HCT116 (cell line): ENCODE measurements at regions of chr3 and their contacts with region 1.

Region 1: DNA sequence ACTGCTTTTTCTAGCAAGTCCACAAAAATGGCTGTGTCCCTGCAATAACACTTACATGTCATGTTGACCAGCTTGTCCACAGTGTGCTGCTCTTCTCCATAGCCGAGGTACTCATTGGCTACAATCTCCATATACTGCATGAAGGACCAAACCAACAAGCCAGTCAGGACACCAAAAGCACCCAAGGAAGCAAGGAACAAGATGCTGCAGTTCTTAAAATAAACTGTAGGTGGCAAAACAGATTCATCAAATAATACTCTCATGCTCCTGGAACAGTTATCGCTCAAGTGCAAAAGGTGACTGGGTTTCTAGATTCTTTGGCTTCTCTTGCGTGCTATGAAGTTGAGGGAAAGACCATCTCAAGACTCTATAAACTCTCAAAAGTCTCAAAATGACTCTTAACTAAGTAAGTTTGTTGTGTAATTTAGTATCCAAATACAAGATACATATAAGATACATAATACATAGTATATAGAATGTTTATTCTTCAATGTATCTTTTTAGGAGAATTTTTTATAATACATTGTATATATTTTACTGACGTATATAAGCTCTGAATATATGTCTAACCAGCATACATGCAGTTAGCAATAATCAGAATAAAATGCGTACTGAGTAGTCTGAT is 57.0 kb downstream of the NEK10 start:
- DNase-seq: peak; percentile 75
- ATAC-seq: peak; percentile 79
- H3K4me3 ChIP-seq: 0 out of 4 replicates have a peak overlapping the region, but pooled peaks of 1 of the 2 experiments have one; percentile 1
- H3K27ac ChIP-seq: peak overlapping the region; percentile 60; the same call in 1 of the 2 replicates
- H3K4me1 ChIP-seq: peaks cover 18 to 27% of the 10 kb centered on the region in 2 experiments
- H3K27me3 ChIP-seq: no peaks in the 10 kb centered on the region
- CTCF ChIP-seq: peak; percentile 69 to 73 (median 70)
- POLR2A ChIP-seq: no peak
- RAD21 ChIP-seq: peak; percentile 80

Region 2: DNA sequence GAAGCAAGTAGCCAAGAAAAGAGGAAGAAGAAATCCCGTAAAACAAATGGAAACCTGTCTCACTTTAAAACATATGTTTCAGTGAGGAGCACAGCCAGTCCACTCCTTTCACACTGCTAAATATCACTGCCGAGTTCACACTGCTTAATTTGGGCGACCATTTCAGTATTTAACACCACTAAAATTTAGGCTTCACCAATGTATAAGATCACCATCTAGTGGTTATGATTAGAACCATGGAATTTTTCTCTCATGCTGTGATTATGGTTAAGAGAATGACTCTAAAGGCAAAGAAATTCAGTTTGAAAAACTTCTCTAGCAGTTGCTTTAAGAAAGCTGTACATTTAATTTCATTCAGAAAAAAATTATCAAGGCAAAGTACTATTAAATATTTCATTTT is 155.4 kb after region 1 on chr3:
- CTCF ChIA-PET with region 1: no interaction called
- POLR2A ChIA-PET with region 1: no interaction called
- RAD21 ChIA-PET with region 1: no interaction called
- intact Hi-C with region 1: loop called (anchors 2 kb)
- DNase-seq: no peak
- ATAC-seq: peak; percentile 82
- H3K4me3 ChIP-seq: no peak overlapping the region
- H3K27ac ChIP-seq: no peak overlapping the region
- H3K4me1 ChIP-seq: peaks cover 3 to 23% of the 10 kb centered on the region in 2 experiments; a peak in 3 of 4 replicates
- H3K27me3 ChIP-seq: no peaks in the 10 kb centered on the region
- CTCF ChIP-seq: peak; percentile 38 to 70 (median 56); a peak in 3 of 6 replicates
- POLR2A ChIP-seq: no peak
- RAD21 ChIP-seq: peak; percentile 63

Region 3: DNA sequence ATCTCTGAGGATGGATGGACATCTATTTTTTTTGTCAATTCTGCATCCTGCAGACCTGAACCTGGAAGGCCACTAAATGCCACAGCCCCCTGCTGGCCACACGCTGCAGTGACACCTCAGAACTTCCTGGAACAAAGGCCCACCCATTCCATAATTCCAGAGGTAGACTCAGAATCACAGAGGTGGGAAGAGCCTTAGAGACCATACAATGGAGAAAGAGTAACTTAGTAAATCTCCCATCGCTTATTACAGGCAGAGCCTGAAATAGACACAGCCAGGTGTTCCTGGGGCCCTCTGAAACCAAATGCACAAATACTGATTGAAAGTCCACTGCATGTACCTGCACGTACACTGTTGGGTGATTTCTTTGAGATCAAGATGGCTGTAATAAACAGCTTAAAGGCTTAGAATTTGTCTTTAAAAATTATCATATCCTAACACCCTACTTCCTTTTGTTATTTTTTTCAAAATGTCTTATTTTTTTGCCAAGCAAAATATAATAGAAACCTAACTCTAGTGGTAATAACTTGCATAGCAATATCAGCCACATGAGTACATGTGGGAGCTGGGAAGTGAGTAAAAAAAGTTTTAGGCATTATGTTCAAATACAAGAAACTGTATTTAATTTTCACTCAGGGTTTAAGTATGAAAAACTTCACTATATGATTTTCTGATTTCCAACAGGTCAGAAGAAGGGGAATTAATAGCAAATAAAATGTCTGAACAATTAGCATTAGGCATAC is 347.3 kb after region 1 on chr3:
- CTCF ChIA-PET with region 1: no interaction called
- POLR2A ChIA-PET with region 1: no interaction called
- RAD21 ChIA-PET with region 1: no interaction called
- intact Hi-C with region 1: loop called (anchors 1 kb)
- DNase-seq: peak; percentile 62
- ATAC-seq: peak; percentile 97
- H3K4me3 ChIP-seq: no peak overlapping the region
- H3K27ac ChIP-seq: no peak overlapping the region
- H3K4me1 ChIP-seq: peaks cover 5% of the 10 kb centered on the region in 2 experiments; a peak in 3 of 4 replicates
- H3K27me3 ChIP-seq: no peaks in the 10 kb centered on the region
- CTCF ChIP-seq: peak; percentile 75 to 92 (median 80)
- POLR2A ChIP-seq: no peak
- RAD21 ChIP-seq: peak; percentile 77

Region 4: DNA sequence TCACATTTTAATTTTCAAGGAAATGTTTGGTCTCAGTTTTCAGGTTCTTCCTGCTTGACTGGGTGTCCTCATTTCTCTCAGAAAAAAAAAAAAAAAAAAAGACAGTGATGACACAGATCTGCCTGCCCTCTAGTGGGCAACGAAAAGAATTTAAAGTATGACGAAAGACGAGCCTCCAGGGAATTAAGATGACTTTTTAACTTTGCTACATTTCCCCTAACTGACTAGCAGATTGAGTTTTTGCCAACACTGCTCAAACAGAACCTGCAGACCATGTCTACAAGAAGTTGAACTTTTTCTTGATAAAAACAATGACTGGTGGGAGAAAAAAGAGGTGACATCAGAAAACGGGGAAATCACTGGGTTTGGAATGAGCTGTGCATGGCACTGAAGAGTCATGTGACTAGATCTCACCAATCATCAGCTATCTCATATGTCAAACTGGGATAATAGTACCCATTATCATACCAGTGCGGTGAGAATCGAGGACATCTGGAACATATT is 369.1 kb after region 1 on chr3:
- CTCF ChIA-PET with region 1: interaction called, 7 read pairs
- POLR2A ChIA-PET with region 1: no interaction called
- RAD21 ChIA-PET with region 1: no interaction called
- intact Hi-C with region 1: loop called (anchors 2 kb)
- DNase-seq: peak; percentile 78
- ATAC-seq: peak; percentile 93
- H3K4me3 ChIP-seq: peak overlapping the region; percentile 17 to 42; a peak in 2 of 4 replicates
- H3K27ac ChIP-seq: no peak overlapping the region
- H3K4me1 ChIP-seq: peaks cover 0 to 19% of the 10 kb centered on the region in 2 experiments; a peak in 2 of 4 replicates
- H3K27me3 ChIP-seq: no peaks in the 10 kb centered on the region
- CTCF ChIP-seq: peak; percentile 52 to 75 (median 75)
- POLR2A ChIP-seq: no peak
- RAD21 ChIP-seq: peak; percentile 86

Region 5: GRCh38 chr3:28328188-28329151 is 1016.3 kb after region 1 on chr3:
- CTCF ChIA-PET with region 1: no interaction called
- POLR2A ChIA-PET with region 1: no interaction called
- RAD21 ChIA-PET with region 1: no interaction called
- intact Hi-C with region 1: loop called (anchors 10 kb)
- DNase-seq: no peak
- ATAC-seq: peak; percentile 32; the same call in 1 of the 2 replicates
- H3K4me3 ChIP-seq: no peak overlapping the region
- H3K27ac ChIP-seq: no peak overlapping the region
- H3K4me1 ChIP-seq: no peaks in the 10 kb centered on the region
- H3K27me3 ChIP-seq: no peaks in the 10 kb centered on the region
- CTCF ChIP-seq: peak; percentile 25 to 75 (median 37); a peak in 3 of 6 replicates
- POLR2A ChIP-seq: no peak
- RAD21 ChIP-seq: peak; percentile 69